Caco-2 (cell line): ENCODE measurements at regions of chr20 and their contacts with region 1.

Region 1: DNA sequence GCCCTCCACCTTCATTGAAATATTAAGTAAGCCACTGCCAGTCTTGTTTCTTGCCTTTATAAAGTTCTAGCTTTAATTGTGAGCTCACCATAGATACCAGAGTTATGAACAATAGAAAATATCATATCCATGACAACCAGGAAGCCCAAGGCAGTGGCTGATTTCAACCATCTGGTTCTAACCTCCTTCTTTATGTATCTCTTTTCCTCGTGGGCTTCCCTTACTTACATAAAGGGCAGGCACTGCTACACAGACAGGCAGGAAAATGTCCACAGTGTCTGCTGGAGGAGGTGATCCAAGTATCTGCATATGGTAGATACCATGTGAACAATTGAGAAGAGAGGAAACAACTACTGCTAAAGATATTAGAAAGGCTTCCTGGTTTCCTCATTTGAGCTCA is 65.2 kb upstream of the PRND start:
- DNase-seq: no peak
- H3K4me3 ChIP-seq: no peak overlapping the region
- H3K4me3 Mint-ChIP-seq: no peak overlapping the region
- H3K27ac Mint-ChIP-seq: no peak overlapping the region
- H3K4me1 ChIP-seq: no peaks in the 10 kb centered on the region
- H3K4me1 Mint-ChIP-seq: no peaks in the 10 kb centered on the region
- H3K27me3 ChIP-seq: no peaks in the 10 kb centered on the region
- H3K27me3 Mint-ChIP-seq: peaks cover 17% of the 10 kb centered on the region
- CTCF ChIP-seq: no peak

Region 2: DNA sequence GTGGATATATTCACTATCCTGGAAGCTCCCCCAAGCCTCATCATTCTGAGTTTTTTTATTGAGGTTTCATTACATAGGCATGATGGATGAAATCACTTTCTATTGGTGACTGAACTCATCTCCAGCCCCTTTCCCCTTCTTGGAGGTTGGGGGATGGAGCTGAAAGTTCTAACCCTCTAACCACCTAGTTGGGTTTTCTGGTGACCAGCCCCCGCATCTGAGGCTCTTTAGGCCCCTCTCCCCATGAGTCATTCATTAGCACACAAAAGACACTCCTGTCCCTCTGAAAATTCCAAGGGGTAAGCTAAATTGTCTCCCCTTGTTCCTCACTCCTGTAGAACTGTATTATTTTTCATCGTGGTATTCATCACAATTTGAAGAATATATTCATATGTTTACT is 1026.6 kb before region 1 on chr20:
- CTCF ChIA-PET with region 1: no interaction called
- POLR2A ChIA-PET with region 1: no interaction called
- intact Hi-C with region 1: no loop called
- DNase-seq: no peak
- H3K4me3 ChIP-seq: no peak overlapping the region
- H3K4me3 Mint-ChIP-seq: no peak overlapping the region
- H3K27ac Mint-ChIP-seq: no peak overlapping the region
- H3K4me1 ChIP-seq: no peaks in the 10 kb centered on the region
- H3K4me1 Mint-ChIP-seq: peaks cover 7% of the 10 kb centered on the region
- H3K27me3 ChIP-seq: no peaks in the 10 kb centered on the region
- H3K27me3 Mint-ChIP-seq: no peaks in the 10 kb centered on the region
- CTCF ChIP-seq: no peak

Region 3: GRCh38 chr20:4720041-4720976 is 63.8 kb after region 1 on chr20:
- CTCF ChIA-PET with region 1: interaction called, 10 read pairs
- POLR2A ChIA-PET with region 1: no interaction called
- intact Hi-C with region 1: no loop called
- DNase-seq: peak; percentile 63 to 73
- H3K4me3 ChIP-seq: no peak overlapping the region
- H3K4me3 Mint-ChIP-seq: peak overlapping the region; percentile 42
- H3K27ac Mint-ChIP-seq: no peak overlapping the region
- H3K4me1 ChIP-seq: peaks cover 4% of the 10 kb centered on the region; the same call in 1 of the 2 replicates
- H3K4me1 Mint-ChIP-seq: peaks cover 6% of the 10 kb centered on the region
- H3K27me3 ChIP-seq: no peaks in the 10 kb centered on the region; the same call in 1 of the 2 replicates
- H3K27me3 Mint-ChIP-seq: no peaks in the 10 kb centered on the region
- CTCF ChIP-seq: peak; percentile 85